ENCODE measurements at regions of chr19 and their contacts with region 1.

Region 1: GRCh38 chr19:47421844-47422395 is 2.6 kb upstream of the MEIS3 start:
- DNase-seq: no peak
- H3K4me3 ChIP-seq: no peak overlapping the region
- H3K27ac ChIP-seq: no peak overlapping the region
- H3K4me1 ChIP-seq: peaks cover 3% of the 10 kb centered on the region
- H3K27me3 ChIP-seq: no peaks in the 10 kb centered on the region
- CTCF ChIP-seq: no peak
- EP300 ChIP-seq: no peak
- POLR2A ChIP-seq: no peak

Region 2: GRCh38 chr19:47456721-47457478 is 35.0 kb after region 1 on chr19:
- intact Hi-C with region 1: loop called in 1 of 4 experiments (anchors 1 kb)
- DNase-seq: no peak
- H3K4me3 ChIP-seq: no peak overlapping the region
- H3K27ac ChIP-seq: no peak overlapping the region
- H3K4me1 ChIP-seq: peaks cover 3% of the 10 kb centered on the region
- H3K27me3 ChIP-seq: peaks cover 10% of the 10 kb centered on the region
- CTCF ChIP-seq: no peak
- EP300 ChIP-seq: no peak
- POLR2A ChIP-seq: no peak

Region 3: DNA sequence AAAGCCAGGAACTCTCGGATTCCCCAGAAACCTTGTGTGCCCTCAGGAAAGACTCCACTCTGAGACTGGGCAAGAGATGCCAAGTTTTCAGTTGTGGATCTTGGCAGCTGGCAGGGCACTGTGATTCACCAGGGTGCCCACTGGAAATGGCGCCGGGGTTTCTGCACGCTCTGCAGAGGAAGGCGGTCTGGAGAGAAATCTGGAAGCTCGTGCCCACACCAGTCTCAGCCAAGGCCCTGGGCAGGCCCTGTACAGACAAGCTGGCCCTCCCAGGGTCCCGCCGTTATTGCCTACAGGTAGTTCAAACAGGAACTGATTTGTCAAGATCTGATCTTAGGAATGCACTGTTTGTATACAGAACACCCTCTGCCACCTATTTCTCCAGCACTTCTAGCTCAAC is 88.1 kb after region 1 on chr19:
- intact Hi-C with region 1: no loop called
- DNase-seq: no peak
- H3K4me3 ChIP-seq: no peak overlapping the region
- H3K27ac ChIP-seq: peak overlapping the region in 1 of 2 donors; percentile 56
- H3K4me1 ChIP-seq: peaks cover 44% of the 10 kb centered on the region
- H3K27me3 ChIP-seq: no peaks in the 10 kb centered on the region
- CTCF ChIP-seq: no peak
- EP300 ChIP-seq: no peak
- POLR2A ChIP-seq: no peak

Measured in ovary (tissue), 10 donors.